Astrocyte of the cerebellum (primary cell): ENCODE measurements at regions of chr22 and their contacts with region 1.

Region 1: DNA sequence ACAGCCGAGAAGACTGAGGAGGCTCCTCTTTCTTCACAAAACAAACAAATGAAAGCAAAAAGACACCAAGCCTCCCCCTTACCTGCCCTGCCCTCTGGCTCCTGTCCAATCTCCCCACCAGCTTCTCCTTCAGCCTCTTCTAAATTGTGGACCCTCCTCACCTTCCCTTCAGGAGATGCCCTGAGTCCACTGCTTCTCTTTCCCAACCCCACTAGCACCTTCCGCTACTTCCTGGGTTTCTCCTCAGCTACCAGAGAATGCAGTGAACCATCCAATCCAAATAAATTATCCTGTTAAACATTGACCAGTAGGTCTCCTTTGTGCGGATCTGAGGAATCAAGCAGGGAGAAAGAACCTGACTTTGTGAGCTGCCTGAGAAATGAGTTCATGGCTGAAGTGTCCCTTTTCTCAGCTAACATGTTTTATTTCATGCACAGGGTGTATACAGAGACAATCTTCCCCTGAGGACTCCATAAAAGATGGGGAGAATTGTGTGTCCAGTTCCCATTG is 63.2 kb upstream of the VPREB1 start:
- DNase-seq: no peak
- H3K4me3 ChIP-seq: no peak overlapping the region
- CTCF ChIP-seq: no peak

Region 2: GRCh38 chr22:22099833-22100812 is 81.3 kb before region 1 on chr22:
- in situ Hi-C with region 1: loop called (anchors 5 kb)
- DNase-seq: no peak
- H3K4me3 ChIP-seq: no peak overlapping the region
- CTCF ChIP-seq: peak; percentile 42

Region 3: DNA sequence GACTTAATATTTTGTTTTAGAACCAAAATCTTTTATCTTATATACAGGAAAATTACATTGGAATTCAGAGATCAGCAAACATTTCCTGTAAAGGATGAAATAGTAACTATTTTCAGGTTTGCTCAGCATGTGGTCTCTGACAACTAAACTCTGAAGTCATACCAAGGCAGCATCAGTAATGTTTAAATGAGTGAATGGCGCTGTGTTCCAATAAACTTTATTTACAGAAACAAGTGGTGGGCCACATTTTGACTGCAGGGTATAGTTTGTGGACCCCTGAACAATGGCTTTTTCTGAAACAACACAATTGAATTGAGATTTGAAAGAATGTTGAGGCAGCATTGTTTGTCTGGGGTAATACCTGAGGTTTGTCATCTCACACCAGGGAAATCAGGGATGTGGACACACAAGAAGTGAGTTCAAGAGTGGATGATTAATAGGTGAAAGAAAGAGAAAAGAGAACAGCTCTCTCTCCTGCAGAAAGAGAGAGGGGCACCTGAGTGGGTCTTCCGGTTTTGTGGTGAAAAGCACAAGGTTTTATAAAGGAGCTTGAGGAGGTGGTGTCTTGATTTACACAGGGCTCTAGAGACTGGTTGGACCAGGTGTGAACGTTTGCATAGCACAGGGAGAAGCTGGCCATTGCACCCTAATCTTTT is 50.3 kb before region 1 on chr22:
- in situ Hi-C with region 1: loop called (anchors 5 kb)
- DNase-seq: no peak
- H3K4me3 ChIP-seq: no peak overlapping the region
- CTCF ChIP-seq: no peak